ENCODE measurements at regions of chr9 and their contacts with region 1.

Region 1: GRCh38 chr9:36166101-36166927 is 2.9 kb upstream of the CCIN start:
- DNase-seq: peak; percentile 85
- ATAC-seq: peak; percentile 97
- H3K4me3 Mint-ChIP-seq: peak overlapping the region; percentile 70
- H3K27ac Mint-ChIP-seq: no peak overlapping the region
- H3K4me1 Mint-ChIP-seq: peaks cover 3% of the 10 kb centered on the region
- H3K27me3 Mint-ChIP-seq: no peaks in the 10 kb centered on the region
- CTCF ChIP-seq: peak; percentile 95

Region 2: DNA sequence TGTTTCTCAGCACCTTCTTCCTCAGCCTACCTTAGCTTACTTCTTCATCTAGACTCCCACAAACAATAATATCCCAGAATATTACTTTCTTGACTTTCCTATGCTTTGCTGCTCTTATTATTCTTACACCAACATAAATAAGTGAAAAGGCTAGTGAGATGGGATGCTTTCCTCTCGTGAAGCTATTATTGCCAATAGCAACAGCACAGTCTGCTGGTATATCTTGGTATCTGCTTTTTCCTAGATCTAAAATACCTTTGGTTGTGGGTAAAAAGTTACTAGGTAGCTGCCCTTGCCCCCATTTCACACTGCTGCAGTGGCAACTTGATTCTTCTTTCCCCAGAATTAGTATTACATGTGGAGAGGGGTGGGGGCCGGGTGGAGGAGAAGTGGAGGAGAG is 55.9 kb before region 1 on chr9:
- CTCF ChIA-PET with region 1: interaction called, 330 read pairs
- POLR2A ChIA-PET with region 1: interaction called, 4 read pairs
- intact Hi-C with region 1: no loop called
- DNase-seq: no peak
- ATAC-seq: no peak
- H3K4me3 Mint-ChIP-seq: no peak overlapping the region
- H3K27ac Mint-ChIP-seq: no peak overlapping the region
- H3K4me1 Mint-ChIP-seq: peaks cover 7% of the 10 kb centered on the region
- H3K27me3 Mint-ChIP-seq: no peaks in the 10 kb centered on the region
- CTCF ChIP-seq: no peak

Region 3: GRCh38 chr9:36127652-36128244 is 38.6 kb before region 1 on chr9:
- CTCF ChIA-PET with region 1: interaction called, 10 read pairs
- POLR2A ChIA-PET with region 1: no interaction called
- intact Hi-C with region 1: no loop called
- DNase-seq: no peak
- ATAC-seq: peak; percentile 39
- H3K4me3 Mint-ChIP-seq: no peak overlapping the region
- H3K27ac Mint-ChIP-seq: no peak overlapping the region
- H3K4me1 Mint-ChIP-seq: peaks cover 17% of the 10 kb centered on the region
- H3K27me3 Mint-ChIP-seq: no peaks in the 10 kb centered on the region
- CTCF ChIP-seq: no peak

Region 4: DNA sequence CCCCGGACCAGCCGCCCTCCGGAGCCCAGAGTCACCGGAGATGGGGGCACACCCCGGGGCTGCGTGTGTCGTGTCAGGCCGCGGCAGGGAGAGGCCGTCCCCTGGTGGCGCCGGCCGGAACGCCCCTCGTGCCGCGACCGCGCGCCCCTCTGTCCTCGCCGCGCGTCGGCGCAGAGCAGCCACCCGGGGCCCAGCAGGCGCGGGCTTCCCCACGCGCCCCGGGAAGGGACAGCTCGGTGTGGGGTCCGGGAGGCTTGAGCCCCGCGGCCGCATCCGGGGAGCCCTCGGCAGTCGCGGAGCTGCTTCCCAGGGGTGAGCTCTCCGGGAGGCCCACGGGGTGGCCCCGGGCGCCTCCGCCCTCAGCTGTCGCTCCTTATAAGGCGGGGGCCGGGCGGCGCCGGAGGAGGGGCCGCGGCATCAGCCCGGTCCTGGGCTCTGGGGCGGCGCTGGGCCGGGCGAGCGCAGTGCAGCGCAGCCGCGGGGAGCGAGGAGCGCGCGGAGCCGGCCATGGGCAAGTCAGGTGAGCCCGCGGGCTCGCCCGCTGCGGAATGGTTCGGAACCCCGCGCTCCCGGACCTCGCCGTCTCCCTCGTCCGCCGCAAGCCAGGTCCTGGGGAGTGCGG is 29.9 kb before region 1 on chr9 and contains the start of gene GLIPR2:
- CTCF ChIA-PET with region 1: interaction called, 10 read pairs
- POLR2A ChIA-PET with region 1: interaction called, 3 read pairs
- intact Hi-C with region 1: no loop called
- DNase-seq: peak; percentile 82
- ATAC-seq: peak; percentile 96
- H3K4me3 Mint-ChIP-seq: peak within 1 kb of the TSS; percentile 85
- H3K27ac Mint-ChIP-seq: peak within 1 kb of the TSS; percentile 68
- H3K4me1 Mint-ChIP-seq: peaks cover 43% of the 10 kb centered on the region
- H3K27me3 Mint-ChIP-seq: no peaks in the 10 kb centered on the region
- CTCF ChIP-seq: peak; percentile 33
- total RNA-seq, gene GLIPR2: 12.2 to 13.6 TPM

Region 5: DNA sequence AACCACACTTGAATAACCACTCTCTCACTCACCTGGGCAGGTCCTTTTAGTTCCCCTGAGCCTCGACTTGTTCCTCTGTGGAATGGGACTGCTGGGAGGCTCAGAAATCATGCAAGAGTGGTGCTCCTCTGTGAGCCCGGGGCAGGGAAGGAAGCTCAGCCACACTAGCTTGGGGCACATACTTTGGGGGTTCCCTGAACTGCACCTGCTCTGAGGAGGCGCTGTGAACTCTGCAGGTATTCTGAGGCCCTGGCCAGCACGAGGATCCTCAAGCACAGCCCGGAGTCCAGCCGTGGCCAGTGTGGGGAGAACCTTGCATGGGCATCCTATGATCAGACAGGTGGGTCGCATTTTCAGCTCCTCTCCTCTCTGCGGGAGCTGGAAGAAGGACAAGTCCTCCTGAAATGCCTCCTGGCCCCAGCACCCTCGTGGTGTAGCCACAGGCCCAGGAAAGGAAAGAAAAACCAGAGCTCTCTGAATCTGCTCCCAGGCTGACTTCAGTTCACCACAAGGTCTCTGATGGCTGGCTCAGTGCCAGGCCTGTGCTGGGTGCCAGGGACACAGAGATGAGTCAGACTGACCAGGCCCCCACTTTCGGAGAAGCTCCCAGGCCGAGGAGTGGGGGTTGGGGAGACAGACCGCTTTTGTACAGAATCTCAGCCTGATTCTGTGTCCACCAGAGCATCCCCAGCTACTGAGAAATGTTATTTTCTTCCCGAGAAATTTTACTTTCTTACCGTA is 17.8 kb before region 1 on chr9:
- CTCF ChIA-PET with region 1: interaction called, 17 read pairs
- POLR2A ChIA-PET with region 1: interaction called, 7 read pairs
- intact Hi-C with region 1: no loop called
- DNase-seq: peak; percentile 92
- ATAC-seq: peak; percentile 32
- H3K4me3 Mint-ChIP-seq: no peak overlapping the region
- H3K27ac Mint-ChIP-seq: peak overlapping the region; percentile 4
- H3K4me1 Mint-ChIP-seq: peaks cover 88% of the 10 kb centered on the region
- H3K27me3 Mint-ChIP-seq: no peaks in the 10 kb centered on the region
- CTCF ChIP-seq: no peak

Region 6: DNA sequence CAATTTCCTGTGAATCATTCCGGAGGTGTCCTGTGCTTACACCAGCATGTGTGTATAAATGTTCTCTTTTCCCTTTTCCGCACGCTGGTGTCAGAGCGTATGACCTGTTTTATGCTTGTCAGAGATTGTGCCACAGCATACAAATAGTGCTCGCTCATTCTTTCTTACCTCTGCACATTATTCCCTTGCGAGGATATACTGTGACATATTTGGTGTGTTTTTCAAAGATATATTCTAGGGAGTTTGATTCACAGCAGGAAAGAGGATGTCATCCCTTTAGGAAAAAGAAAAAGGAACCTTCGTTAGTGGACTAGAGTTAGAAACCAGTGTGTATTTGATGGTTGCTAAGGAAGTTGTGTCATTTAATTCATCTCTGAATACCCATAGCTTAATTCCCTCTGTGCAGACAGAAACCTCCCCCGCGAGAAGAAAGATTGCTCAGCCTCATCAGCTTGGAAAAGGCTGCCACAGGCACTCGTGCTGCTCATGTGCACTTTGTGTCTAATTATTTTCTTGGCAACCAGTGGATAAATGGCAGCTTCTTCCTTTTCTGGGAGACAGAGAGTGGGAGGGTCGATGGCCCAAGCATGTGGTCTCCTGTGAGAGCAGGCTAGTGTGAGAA is 11.9 kb before region 1 on chr9:
- CTCF ChIA-PET with region 1: interaction called, 17 read pairs
- POLR2A ChIA-PET with region 1: interaction called, 7 read pairs
- intact Hi-C with region 1: no loop called
- DNase-seq: no peak
- ATAC-seq: no peak
- H3K4me3 Mint-ChIP-seq: no peak overlapping the region
- H3K27ac Mint-ChIP-seq: no peak overlapping the region
- H3K4me1 Mint-ChIP-seq: peaks cover 46% of the 10 kb centered on the region
- H3K27me3 Mint-ChIP-seq: no peaks in the 10 kb centered on the region
- CTCF ChIP-seq: no peak

Region 7: DNA sequence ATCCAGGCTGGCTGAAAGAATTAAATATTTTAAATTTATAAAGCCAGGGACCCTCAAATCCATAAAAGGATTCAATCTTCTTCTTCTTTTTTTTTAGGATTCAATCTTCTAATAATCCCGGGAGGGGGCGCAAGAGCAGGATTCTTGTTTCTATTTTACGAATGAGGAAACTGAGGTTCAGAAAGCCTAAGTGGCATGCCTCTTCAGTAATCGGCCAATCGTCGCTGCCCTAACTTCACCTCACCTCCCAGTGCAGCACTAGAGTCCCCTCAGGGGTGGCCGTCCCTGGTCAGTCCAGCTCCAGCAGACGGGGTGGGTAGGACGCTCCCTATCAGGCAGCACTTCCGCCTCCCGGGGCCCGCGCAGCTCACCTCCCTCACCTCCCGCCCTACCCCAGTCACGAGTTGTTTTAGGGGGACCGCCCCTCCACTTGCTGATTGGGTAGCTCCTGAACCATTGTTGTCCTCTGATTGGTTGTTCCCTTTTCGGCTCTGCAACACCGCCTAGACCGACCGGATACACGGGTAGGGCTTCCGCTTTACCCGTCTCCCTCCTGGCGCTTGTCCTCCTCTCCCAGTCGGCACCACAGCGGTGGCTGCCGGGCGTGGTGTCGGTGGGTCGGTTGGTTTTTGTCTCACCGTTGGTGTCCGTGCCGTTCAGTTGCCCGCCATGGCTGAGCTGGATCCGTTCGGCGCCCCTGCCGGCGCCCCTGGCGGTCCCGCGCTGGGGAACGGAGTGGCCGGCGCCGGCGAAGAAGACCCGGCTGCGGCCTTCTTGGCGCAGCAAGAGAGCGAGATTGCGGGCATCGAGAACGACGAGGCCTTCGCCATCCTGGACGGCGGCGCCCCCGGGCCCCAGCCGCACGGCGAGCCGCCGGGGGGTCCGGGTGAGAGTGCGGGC is 24.3 kb after region 1 on chr9 and contains the start of gene CLTA:
- CTCF ChIA-PET with region 1: interaction called, 10 read pairs
- POLR2A ChIA-PET with region 1: interaction called, 4 read pairs
- intact Hi-C with region 1: no loop called
- DNase-seq: peak; percentile 97
- ATAC-seq: peak; percentile 99
- H3K4me3 Mint-ChIP-seq: peak within 1 kb of the TSS; percentile 94
- H3K27ac Mint-ChIP-seq: peak within 1 kb of the TSS; percentile 90
- H3K4me1 Mint-ChIP-seq: peaks cover 40% of the 10 kb centered on the region
- H3K27me3 Mint-ChIP-seq: no peaks in the 10 kb centered on the region
- CTCF ChIP-seq: peak; percentile 52
- total RNA-seq, gene CLTA: 116 to 119 TPM